Mammary epithelial cell (primary cell): ENCODE measurements at regions of chr7 and their contacts with region 1.

Region 1: DNA sequence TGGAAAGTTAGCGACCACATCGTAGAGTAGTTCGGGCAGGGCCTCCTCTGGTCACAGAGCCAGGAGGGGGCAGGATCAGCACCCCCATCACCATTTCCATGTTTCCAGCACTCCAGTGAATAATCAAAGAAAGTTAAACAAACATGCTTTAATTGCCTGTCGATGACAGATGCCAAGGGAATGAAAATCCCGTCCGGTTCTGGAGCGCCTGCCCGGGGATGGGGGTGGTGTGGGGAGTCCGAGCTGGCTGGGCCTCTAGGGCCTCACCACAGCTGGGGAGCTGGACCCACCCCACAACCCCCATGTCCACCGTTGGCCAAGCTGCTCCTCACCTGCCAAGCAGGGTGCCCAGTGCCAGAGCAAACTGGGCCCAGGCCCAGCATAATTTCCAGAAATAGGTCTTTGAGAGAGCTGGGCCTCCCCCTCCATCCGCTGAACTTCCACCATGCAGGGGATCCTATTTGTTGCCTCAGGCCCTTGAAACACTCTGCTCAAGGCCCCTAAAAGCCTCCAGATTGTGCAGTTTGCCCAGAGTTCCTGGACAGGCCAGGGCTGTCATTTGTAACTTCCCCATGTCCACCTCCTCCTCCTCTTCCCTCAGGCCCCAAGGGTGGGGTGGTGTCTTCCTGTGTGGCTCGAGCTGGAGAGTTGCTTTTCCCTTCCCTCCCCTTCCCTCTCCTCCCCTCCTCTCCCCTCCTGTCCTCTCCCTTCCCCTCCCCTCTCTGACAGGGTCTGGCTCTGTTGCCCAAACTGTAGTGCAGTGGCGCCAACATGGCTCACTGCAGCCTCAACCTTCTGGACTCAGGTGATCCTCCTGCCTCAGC is 101.0 kb downstream of the MYL10 start:
- DNase-seq: no peak
- H3K4me3 ChIP-seq: no peak overlapping the region
- H3K27ac ChIP-seq: no peak overlapping the region
- H3K4me1 ChIP-seq: no peaks in the 10 kb centered on the region
- H3K27me3 ChIP-seq: no peaks in the 10 kb centered on the region
- CTCF ChIP-seq: no peak

Region 2: DNA sequence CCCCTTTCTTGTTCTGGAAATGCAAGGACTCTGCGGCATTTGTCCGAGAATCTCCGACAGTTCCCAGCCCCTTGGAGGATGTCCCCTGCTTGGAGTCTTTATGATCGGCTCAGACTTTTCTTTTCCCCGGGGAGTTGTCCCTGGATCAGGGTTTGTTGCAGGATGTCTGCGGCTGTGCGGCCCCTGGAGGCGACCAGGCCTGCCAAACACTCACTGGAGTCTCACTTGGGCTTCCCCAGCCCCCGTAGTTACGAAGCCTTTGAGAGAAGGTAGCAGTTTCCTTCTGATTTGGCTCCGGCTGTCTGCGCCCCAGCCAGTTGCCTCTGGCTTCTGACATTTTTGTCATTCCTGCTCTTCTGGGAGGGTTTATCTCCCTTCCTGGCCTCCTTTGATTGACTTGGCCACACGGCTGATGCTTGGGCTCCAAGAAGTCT is 149.3 kb before region 1 on chr7:
- CTCF ChIA-PET with region 1: no interaction called
- dilution Hi-C with region 1: no loop called
- in situ Hi-C with region 1: loop called in 1 of 2 experiments (anchors 10 kb)
- intact Hi-C with region 1: no loop called
- DNase-seq: no peak
- H3K4me3 ChIP-seq: no peak overlapping the region
- H3K27ac ChIP-seq: no peak overlapping the region
- H3K4me1 ChIP-seq: no peaks in the 10 kb centered on the region
- H3K27me3 ChIP-seq: peaks cover 4% of the 10 kb centered on the region
- CTCF ChIP-seq: no peak

Region 3: DNA sequence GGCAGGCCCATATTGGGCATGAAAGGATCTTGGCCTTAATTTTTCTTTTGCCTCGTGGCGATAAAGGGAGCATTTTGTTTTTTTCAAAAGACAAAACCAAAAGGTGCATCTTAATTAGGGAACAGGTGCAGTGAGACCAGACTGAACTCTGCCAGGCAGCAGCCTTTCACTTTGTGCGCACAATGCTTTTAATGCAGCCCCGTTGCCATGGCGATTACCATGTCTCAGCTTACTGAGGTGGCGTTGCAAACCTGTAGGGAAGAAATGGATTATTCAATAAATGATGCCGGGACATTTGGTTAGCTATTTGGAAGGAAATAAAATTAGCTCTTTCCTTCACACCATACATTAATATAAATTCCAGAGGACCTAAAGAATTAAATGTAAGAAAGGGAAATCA is 39.2 kb after region 1 on chr7:
- CTCF ChIA-PET with region 1: no interaction called
- dilution Hi-C with region 1: no loop called
- in situ Hi-C with region 1: no loop called
- intact Hi-C with region 1: no loop called
- DNase-seq: no peak
- H3K4me3 ChIP-seq: no peak overlapping the region
- H3K27ac ChIP-seq: no peak overlapping the region
- H3K4me1 ChIP-seq: no peaks in the 10 kb centered on the region
- H3K27me3 ChIP-seq: no peaks in the 10 kb centered on the region
- CTCF ChIP-seq: no peak